B cell (primary cell): ENCODE measurements at regions of chr2 and their contacts with region 1.

Region 1: DNA sequence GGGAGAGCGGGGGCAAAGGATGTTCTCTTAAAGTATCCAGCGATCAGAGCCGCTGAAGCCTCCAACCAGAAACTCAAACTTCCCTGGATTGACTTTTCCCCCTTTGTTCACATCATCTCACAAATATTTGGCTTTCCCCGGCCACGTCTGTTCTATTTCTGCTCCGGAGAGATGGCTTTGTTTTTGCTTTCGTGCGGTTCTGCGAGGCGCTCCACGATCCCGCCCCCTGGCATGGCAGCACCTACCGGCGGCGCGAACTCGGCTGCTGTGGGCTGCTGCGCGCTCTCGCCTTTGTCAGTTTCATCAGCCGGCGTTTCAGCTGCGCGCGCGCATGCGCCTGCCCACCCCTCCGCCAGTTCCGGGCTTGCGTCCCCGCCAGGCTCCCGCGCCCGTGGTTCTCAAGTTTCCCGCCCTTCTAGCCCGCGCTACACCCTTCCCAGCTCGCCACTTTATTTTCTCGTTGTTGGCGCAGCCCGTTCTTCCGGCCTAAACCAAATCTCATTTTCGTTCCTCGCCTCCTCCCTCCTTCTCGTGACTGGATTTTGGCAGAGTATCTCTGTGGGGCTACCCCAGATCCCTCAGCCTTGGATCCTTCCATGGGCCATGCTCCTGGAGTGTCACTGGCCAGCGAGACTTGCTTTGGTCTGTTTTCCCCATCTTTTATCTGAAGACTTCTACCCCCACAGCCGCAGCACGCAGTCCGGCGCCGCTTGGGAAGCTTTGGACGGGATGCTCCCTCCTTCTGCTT is 98.0 kb downstream of the INSIG2 start:
- DNase-seq: peak; percentile 89
- ATAC-seq: peak; percentile 93
- H3K4me3 ChIP-seq: peak overlapping the region; percentile 60 to 90 (median 80)
- H3K4me3 Mint-ChIP-seq: peak overlapping the region; percentile 90
- H3K27ac ChIP-seq: peak overlapping the region; percentile 56 to 75
- H3K27ac Mint-ChIP-seq: peak overlapping the region; percentile 89
- H3K4me1 ChIP-seq: peaks cover 0 to 14% of the 10 kb centered on the region in 2 donors
- H3K4me1 Mint-ChIP-seq: peaks cover 17% of the 10 kb centered on the region
- H3K27me3 ChIP-seq: peaks cover 0 to 3% (median 2%) of the 10 kb centered on the region in 4 experiments
- H3K27me3 Mint-ChIP-seq: peaks cover 6% of the 10 kb centered on the region
- CTCF ChIP-seq: no peak

Region 2: GRCh38 chr2:117958186-117958585 is 228.1 kb before region 1 on chr2:
- CTCF ChIA-PET with region 1: no interaction called
- POLR2A ChIA-PET with region 1: no interaction called
- intact Hi-C with region 1: no loop called
- DNase-seq: no peak
- ATAC-seq: no peak
- H3K4me3 ChIP-seq: no peak overlapping the region
- H3K4me3 Mint-ChIP-seq: no peak overlapping the region
- H3K27ac ChIP-seq: no peak overlapping the region
- H3K27ac Mint-ChIP-seq: no peak overlapping the region
- H3K4me1 ChIP-seq: no peaks in the 10 kb centered on the region
- H3K4me1 Mint-ChIP-seq: no peaks in the 10 kb centered on the region
- H3K27me3 ChIP-seq: no peaks in the 10 kb centered on the region
- H3K27me3 Mint-ChIP-seq: no peaks in the 10 kb centered on the region
- CTCF ChIP-seq: no peak

Region 3: GRCh38 chr2:118013724-118014491 is 172.4 kb before region 1 on chr2 and contains the start of gene CCDC93:
- CTCF ChIA-PET with region 1: no interaction called
- POLR2A ChIA-PET with region 1: no interaction called
- intact Hi-C with region 1: loop called (anchors 1 kb)
- DNase-seq: peak; percentile 94
- ATAC-seq: peak; percentile 86
- H3K4me3 ChIP-seq: peak within 1 kb of the TSS; percentile 82 to 99 (median 96)
- H3K4me3 Mint-ChIP-seq: peak within 1 kb of the TSS; percentile 97
- H3K27ac ChIP-seq: peak within 1 kb of the TSS; percentile 90 to 97
- H3K27ac Mint-ChIP-seq: peak within 1 kb of the TSS; percentile 92
- H3K4me1 ChIP-seq: peaks cover 21 to 24% of the 10 kb centered on the region in 2 donors
- H3K4me1 Mint-ChIP-seq: peaks cover 34% of the 10 kb centered on the region
- H3K27me3 ChIP-seq: peaks cover 0 to 9% (median 0%) of the 10 kb centered on the region in 4 experiments
- H3K27me3 Mint-ChIP-seq: peaks cover 9% of the 10 kb centered on the region
- CTCF ChIP-seq: no peak
- total RNA-seq, gene CCDC93: 79.6 and 86.7 TPM in 2 replicates

Region 4: GRCh38 chr2:118056165-118056534 is 130.1 kb before region 1 on chr2:
- CTCF ChIA-PET with region 1: interaction called, 4 read pairs
- POLR2A ChIA-PET with region 1: no interaction called
- intact Hi-C with region 1: loop called (anchors 2 kb)
- DNase-seq: peak; percentile 86
- ATAC-seq: peak; percentile 91
- H3K4me3 ChIP-seq: peak overlapping the region in 2 of 5 experiments; percentile 16 to 22
- H3K4me3 Mint-ChIP-seq: peak overlapping the region; percentile 80
- H3K27ac ChIP-seq: peak overlapping the region; percentile 67 to 88
- H3K27ac Mint-ChIP-seq: peak overlapping the region; percentile 98
- H3K4me1 ChIP-seq: peaks cover 52 to 63% of the 10 kb centered on the region in 2 donors
- H3K4me1 Mint-ChIP-seq: peaks cover 60% of the 10 kb centered on the region
- H3K27me3 ChIP-seq: no peaks in the 10 kb centered on the region
- H3K27me3 Mint-ChIP-seq: no peaks in the 10 kb centered on the region
- CTCF ChIP-seq: no peak

Region 5: GRCh38 chr2:118124284-118124891 is 61.9 kb before region 1 on chr2:
- CTCF ChIA-PET with region 1: no interaction called
- POLR2A ChIA-PET with region 1: no interaction called
- intact Hi-C with region 1: no loop called
- DNase-seq: peak; percentile 22
- ATAC-seq: no peak
- H3K4me3 ChIP-seq: no peak overlapping the region
- H3K4me3 Mint-ChIP-seq: no peak overlapping the region
- H3K27ac ChIP-seq: no peak overlapping the region
- H3K27ac Mint-ChIP-seq: no peak overlapping the region
- H3K4me1 ChIP-seq: no peaks in the 10 kb centered on the region
- H3K4me1 Mint-ChIP-seq: no peaks in the 10 kb centered on the region
- H3K27me3 ChIP-seq: peaks cover 0 to 6% (median 1%) of the 10 kb centered on the region in 4 experiments
- H3K27me3 Mint-ChIP-seq: peaks cover 16% of the 10 kb centered on the region
- CTCF ChIP-seq: no peak

Region 6: DNA sequence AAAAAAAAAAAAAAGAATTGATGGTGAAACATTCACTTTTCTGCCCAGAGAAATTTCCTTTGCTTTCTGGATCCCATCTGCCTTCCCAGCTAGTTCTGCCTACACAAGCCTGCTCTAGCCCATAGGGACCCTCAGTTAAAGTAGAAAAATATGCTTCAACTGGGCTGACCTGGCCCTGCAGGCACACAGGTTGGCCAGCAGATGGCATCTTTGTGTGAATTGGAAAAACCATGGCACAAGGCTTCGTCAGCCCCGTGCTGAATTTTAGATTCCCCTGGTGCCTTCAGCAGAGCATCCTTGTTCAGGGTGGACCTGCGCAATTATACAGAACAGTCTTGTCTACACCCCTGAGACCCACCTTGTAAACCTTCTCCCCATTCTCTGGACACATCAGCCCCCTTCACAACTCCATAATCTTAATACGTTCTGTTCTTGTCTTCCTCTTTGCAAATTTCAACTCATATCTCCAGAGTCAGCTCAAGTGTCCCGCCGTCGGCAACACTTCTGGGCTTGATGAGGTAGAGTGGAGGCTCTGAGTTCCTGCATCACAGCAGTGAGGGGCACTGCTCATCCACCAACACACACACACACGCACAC is 16.5 kb after region 1 on chr2:
- CTCF ChIA-PET with region 1: interaction called, 5 read pairs
- POLR2A ChIA-PET with region 1: no interaction called
- intact Hi-C with region 1: loop called (anchors 1 kb)
- DNase-seq: peak; percentile 66
- ATAC-seq: peak; percentile 87
- H3K4me3 ChIP-seq: no peak overlapping the region
- H3K4me3 Mint-ChIP-seq: no peak overlapping the region
- H3K27ac ChIP-seq: no peak overlapping the region
- H3K27ac Mint-ChIP-seq: no peak overlapping the region
- H3K4me1 ChIP-seq: peaks cover 0 to 5% of the 10 kb centered on the region in 2 donors
- H3K4me1 Mint-ChIP-seq: peaks cover 4% of the 10 kb centered on the region
- H3K27me3 ChIP-seq: peaks cover 0 to 15% (median 6%) of the 10 kb centered on the region in 4 experiments
- H3K27me3 Mint-ChIP-seq: peaks cover 47% of the 10 kb centered on the region
- CTCF ChIP-seq: peak; percentile 91

Region 7: GRCh38 chr2:118372886-118373830 is 186.9 kb after region 1 on chr2:
- CTCF ChIA-PET with region 1: no interaction called
- POLR2A ChIA-PET with region 1: no interaction called
- intact Hi-C with region 1: no loop called
- DNase-seq: no peak
- ATAC-seq: no peak
- H3K4me3 ChIP-seq: no peak overlapping the region
- H3K4me3 Mint-ChIP-seq: no peak overlapping the region
- H3K27ac ChIP-seq: no peak overlapping the region
- H3K27ac Mint-ChIP-seq: no peak overlapping the region
- H3K4me1 ChIP-seq: no peaks in the 10 kb centered on the region
- H3K4me1 Mint-ChIP-seq: no peaks in the 10 kb centered on the region
- H3K27me3 ChIP-seq: no peaks in the 10 kb centered on the region
- H3K27me3 Mint-ChIP-seq: peaks cover 21% of the 10 kb centered on the region
- CTCF ChIP-seq: no peak

Region 8: GRCh38 chr2:118386641-118387302 is 200.5 kb after region 1 on chr2:
- CTCF ChIA-PET with region 1: no interaction called
- POLR2A ChIA-PET with region 1: no interaction called
- intact Hi-C with region 1: no loop called
- DNase-seq: no peak
- ATAC-seq: no peak
- H3K4me3 ChIP-seq: no peak overlapping the region
- H3K4me3 Mint-ChIP-seq: no peak overlapping the region
- H3K27ac ChIP-seq: no peak overlapping the region
- H3K27ac Mint-ChIP-seq: no peak overlapping the region
- H3K4me1 ChIP-seq: no peaks in the 10 kb centered on the region
- H3K4me1 Mint-ChIP-seq: no peaks in the 10 kb centered on the region
- H3K27me3 ChIP-seq: peaks cover 0 to 3% (median 0%) of the 10 kb centered on the region in 4 experiments
- H3K27me3 Mint-ChIP-seq: peaks cover 4% of the 10 kb centered on the region
- CTCF ChIP-seq: no peak